ENCODE measurements at regions of chr19 and their contacts with region 1.

Region 1: GRCh38 chr19:14117668-14118164 is at the start of gene PRKACA:
- DNase-seq: peak; percentile 99
- ATAC-seq: peak; percentile 98
- H3K4me3 Mint-ChIP-seq: peak within 1 kb of the TSS; percentile 89
- H3K27ac Mint-ChIP-seq: peak within 1 kb of the TSS; percentile 76
- H3K4me1 Mint-ChIP-seq: peaks cover 52% of the 10 kb centered on the region
- H3K27me3 Mint-ChIP-seq: no peaks in the 10 kb centered on the region
- total RNA-seq, gene PRKACA: 69.2 to 72.4 TPM

Region 2: GRCh38 chr19:13880059-13881043 is 237.4 kb before region 1 on chr19:
- CTCF ChIA-PET with region 1: interaction called, 40 read pairs
- POLR2A ChIA-PET with region 1: no interaction called
- DNase-seq: peak; percentile 99
- ATAC-seq: peak; percentile 96
- H3K4me3 Mint-ChIP-seq: peak overlapping the region; percentile 54
- H3K27ac Mint-ChIP-seq: peak overlapping the region; percentile 64
- H3K4me1 Mint-ChIP-seq: peaks cover 45% of the 10 kb centered on the region
- H3K27me3 Mint-ChIP-seq: peaks cover 8% of the 10 kb centered on the region

Region 3: GRCh38 chr19:14081325-14082093 is 36.2 kb before region 1 on chr19:
- CTCF ChIA-PET with region 1: interaction called, 15 read pairs
- POLR2A ChIA-PET with region 1: interaction called, 3 read pairs
- DNase-seq: peak; percentile 100
- ATAC-seq: peak; percentile 96
- H3K4me3 Mint-ChIP-seq: peak overlapping the region; percentile 92
- H3K27ac Mint-ChIP-seq: peak overlapping the region; percentile 92
- H3K4me1 Mint-ChIP-seq: peaks cover 18% of the 10 kb centered on the region
- H3K27me3 Mint-ChIP-seq: no peaks in the 10 kb centered on the region

Region 4: GRCh38 chr19:14091081-14091812 is 26.5 kb before region 1 on chr19:
- CTCF ChIA-PET with region 1: interaction called, 20 read pairs
- POLR2A ChIA-PET with region 1: interaction called, 4 read pairs
- DNase-seq: peak; percentile 65
- ATAC-seq: peak; percentile 78
- H3K4me3 Mint-ChIP-seq: peak overlapping the region; percentile 93
- H3K27ac Mint-ChIP-seq: peak overlapping the region; percentile 96
- H3K4me1 Mint-ChIP-seq: peaks cover 24% of the 10 kb centered on the region
- H3K27me3 Mint-ChIP-seq: no peaks in the 10 kb centered on the region

Region 5: GRCh38 chr19:14097532-14098151 is 20.1 kb before region 1 on chr19:
- CTCF ChIA-PET with region 1: interaction called, 23 read pairs
- POLR2A ChIA-PET with region 1: no interaction called
- DNase-seq: no peak
- ATAC-seq: no peak
- H3K4me3 Mint-ChIP-seq: no peak overlapping the region
- H3K27ac Mint-ChIP-seq: no peak overlapping the region
- H3K4me1 Mint-ChIP-seq: peaks cover 8% of the 10 kb centered on the region
- H3K27me3 Mint-ChIP-seq: no peaks in the 10 kb centered on the region

Region 6: DNA sequence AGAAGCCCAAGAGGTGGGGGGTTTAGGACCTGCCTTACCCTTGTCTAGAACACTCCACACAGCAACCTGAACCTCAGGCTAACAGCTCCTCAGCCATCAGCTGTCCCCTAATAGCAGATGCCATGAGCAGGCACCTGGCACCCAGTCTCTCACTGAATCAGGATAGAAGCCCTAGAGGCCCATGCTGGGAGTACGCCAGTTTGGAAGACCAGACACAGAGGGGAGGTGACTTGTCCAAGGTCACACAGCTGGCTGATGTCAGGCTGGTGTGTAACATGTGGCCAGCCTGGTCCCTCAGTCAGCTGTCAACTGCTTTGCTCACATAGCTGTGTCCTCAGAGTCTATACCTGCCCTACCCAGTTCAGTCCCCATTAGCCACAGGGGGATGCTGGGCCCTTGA is 14.4 kb before region 1 on chr19:
- CTCF ChIA-PET with region 1: interaction called, 23 read pairs
- POLR2A ChIA-PET with region 1: no interaction called
- DNase-seq: no peak
- ATAC-seq: no peak
- H3K4me3 Mint-ChIP-seq: no peak overlapping the region
- H3K27ac Mint-ChIP-seq: no peak overlapping the region
- H3K4me1 Mint-ChIP-seq: peaks cover 5% of the 10 kb centered on the region
- H3K27me3 Mint-ChIP-seq: no peaks in the 10 kb centered on the region

Region 7: DNA sequence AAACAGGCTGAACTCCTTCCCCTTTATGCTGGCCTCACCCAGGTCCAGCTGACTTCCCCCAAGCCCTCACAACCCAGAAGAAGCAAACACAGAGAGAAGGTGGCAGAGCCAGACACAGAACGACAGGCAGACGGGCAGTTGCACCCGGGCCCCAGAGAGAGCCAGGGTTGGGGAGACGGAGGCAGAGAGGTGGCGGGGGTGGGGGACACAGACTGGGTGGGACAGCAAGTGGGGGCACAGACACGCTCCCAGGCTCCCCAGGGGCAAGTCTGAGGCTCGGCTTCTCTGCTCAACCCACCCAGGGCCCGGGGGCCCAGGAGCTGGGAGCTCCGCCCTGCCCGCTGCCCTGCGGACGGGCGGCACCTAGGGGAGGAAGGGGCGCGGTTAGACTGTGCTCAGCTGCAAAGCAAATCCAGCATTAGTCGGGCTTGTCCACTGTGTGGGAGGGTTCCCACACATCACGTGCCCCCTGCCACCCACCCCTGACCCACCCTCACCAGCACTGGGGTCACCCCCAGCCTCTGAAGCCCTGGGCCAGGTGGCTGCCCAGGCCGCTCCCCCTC is 49.9 kb after region 1 on chr19:
- CTCF ChIA-PET with region 1: no interaction called
- POLR2A ChIA-PET with region 1: no interaction called
- DNase-seq: no peak
- ATAC-seq: peak; percentile 57
- H3K4me3 Mint-ChIP-seq: peak overlapping the region; percentile 68
- H3K27ac Mint-ChIP-seq: peak overlapping the region; percentile 81
- H3K4me1 Mint-ChIP-seq: peaks cover 33% of the 10 kb centered on the region
- H3K27me3 Mint-ChIP-seq: no peaks in the 10 kb centered on the region

Measured in activated CD8-positive, alpha-beta T cell treated with anti-CD3 and anti-CD28 coated beads, Interleukin-2, amount 10 ng/mL, durations not matched to agents 7 days and 5 days (primary cell).